ENCODE measurements at regions of chr11 and their contacts with region 1.

Region 1: GRCh38 chr11:62591448-62592145 is at the start of gene TUT1:
- DNase-seq: peak; percentile 98
- ATAC-seq: peak; percentile 86
- H3K4me3 ChIP-seq: peak within 1 kb of the TSS; percentile 81 to 89 (median 82)
- H3K27ac ChIP-seq: peak within 1 kb of the TSS; percentile 85
- H3K4me1 ChIP-seq: peaks cover 51% of the 10 kb centered on the region
- H3K27me3 ChIP-seq: no peaks in the 10 kb centered on the region; a peak in 1 of 5 replicates
- CTCF ChIP-seq: no peak; the same call in 1 of the 2 replicates
- EP300 ChIP-seq: peak in 1 of 2 experiments; percentile 60; a peak in 1 of 4 replicates
- POLR2A ChIP-seq: peak; percentile 96 to 97
- RAD21 ChIP-seq: no peak; the same call in 1 of the 2 replicates
- total RNA-seq, gene TUT1: 8.5 and 9.7 TPM in 2 replicates

Region 2: DNA sequence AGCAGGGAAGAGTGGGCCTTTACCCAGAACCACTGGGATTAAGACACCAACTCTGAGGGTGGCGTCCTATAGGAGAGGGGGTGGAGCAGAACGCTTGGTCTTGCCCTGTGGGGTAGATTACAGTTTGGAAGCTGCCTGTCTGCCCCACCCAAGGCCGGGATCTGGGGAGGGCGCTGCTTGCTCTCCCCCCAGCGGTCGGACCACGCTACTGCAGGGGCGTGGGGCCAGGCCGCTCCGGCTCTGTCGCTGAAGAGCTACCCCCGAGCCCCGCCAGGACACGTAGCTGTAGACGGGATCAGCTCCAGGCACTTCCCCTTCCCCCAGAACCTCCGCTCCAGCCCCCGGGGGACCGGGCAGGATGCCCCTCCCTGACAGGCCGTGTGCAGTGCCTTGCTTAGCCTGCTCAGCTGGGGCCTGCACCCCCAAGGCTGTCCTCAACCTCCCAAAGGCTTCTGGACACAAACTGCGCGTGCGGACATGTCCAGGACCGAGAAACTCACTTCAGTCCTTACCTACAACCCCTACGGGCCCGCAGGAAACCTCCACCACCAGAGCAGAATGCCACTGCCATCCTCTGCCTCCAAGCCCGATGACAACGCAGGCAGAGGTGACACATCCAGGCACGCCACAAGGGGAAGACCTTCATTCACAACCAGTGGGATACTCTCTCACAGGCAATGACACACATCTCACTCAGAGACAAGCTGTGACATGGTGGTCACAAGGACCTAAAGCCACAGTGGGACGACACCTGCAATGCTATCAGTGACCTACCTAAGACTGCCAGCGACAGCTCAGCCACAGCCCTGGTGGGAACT is 48.6 kb before region 1 on chr11:
- CTCF ChIA-PET with region 1: no interaction called
- POLR2A ChIA-PET with region 1: interaction called, 20 read pairs
- in situ Hi-C with region 1: no loop called
- intact Hi-C with region 1: no loop called
- DNase-seq: no peak
- ATAC-seq: peak; percentile 35
- H3K4me3 ChIP-seq: peak overlapping the region; percentile 33 to 93 (median 79)
- H3K27ac ChIP-seq: peak overlapping the region; percentile 19
- H3K4me1 ChIP-seq: peaks cover 60% of the 10 kb centered on the region
- H3K27me3 ChIP-seq: no peaks in the 10 kb centered on the region
- CTCF ChIP-seq: peak; percentile 97
- EP300 ChIP-seq: no peak
- POLR2A ChIP-seq: 0 out of 4 replicates have a peak, but pooled peaks of 1 of the 2 experiments have one; percentile 11
- RAD21 ChIP-seq: peak; percentile 98

Region 3: DNA sequence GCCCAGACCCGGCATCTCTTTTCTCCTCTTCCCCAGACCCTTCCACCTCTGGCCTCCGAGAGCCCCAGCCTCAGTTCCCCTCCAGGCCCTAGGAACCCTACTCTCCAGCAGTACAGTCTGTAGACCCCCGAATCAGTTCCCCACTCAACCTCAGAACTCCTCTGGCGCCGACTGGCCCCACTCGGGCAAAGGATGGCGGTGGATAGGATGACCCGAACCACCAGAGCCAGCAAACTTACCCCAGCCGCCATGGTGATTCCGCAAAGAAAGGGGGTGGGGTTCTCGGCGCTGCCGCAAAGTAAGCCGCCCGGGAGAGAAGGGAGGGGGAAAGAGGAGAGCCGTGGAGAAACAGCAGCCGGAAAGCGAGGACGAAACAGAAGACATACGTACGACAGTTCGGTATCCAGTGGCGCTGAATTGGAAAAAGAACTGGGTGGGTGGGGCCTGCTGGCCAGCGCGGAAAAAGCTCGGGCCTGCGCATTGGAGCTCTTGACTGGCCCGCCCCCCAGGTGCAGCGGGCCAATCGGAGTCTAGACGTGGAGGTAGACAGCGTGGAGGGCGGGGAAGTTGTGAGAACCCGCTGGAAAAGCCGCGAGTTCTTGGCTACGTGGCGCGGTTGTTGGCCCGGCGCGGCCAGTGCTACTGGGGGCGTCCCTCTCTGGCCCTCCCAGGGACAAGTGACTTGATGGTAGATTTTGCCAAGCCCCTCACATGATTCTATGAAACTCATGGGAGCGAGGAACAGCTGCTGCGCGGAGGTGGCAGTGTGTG is 17.8 kb before region 1 on chr11 and contains the start of gene EEF1G:
- CTCF ChIA-PET with region 1: no interaction called
- POLR2A ChIA-PET with region 1: interaction called, 160 read pairs
- in situ Hi-C with region 1: no loop called
- intact Hi-C with region 1: no loop called
- DNase-seq: peak; percentile 99
- ATAC-seq: peak; percentile 93
- H3K4me3 ChIP-seq: peak within 1 kb of the TSS; percentile 80 to 96 (median 95)
- H3K27ac ChIP-seq: peak within 1 kb of the TSS; percentile 85
- H3K4me1 ChIP-seq: peaks cover 63% of the 10 kb centered on the region
- H3K27me3 ChIP-seq: no peaks in the 10 kb centered on the region; a peak in 1 of 5 replicates
- CTCF ChIP-seq: no peak; the same call in 1 of the 2 replicates
- EP300 ChIP-seq: no peak
- POLR2A ChIP-seq: peak; percentile 89 to 91
- RAD21 ChIP-seq: no peak
- total RNA-seq, gene EEF1G: 1,787 and 2,092 TPM in 2 replicates

Region 4: GRCh38 chr11:62621567-62622470 is 30.2 kb after region 1 on chr11 and contains the start of gene B3GAT3:
- CTCF ChIA-PET with region 1: no interaction called
- POLR2A ChIA-PET with region 1: interaction called, 80 read pairs
- in situ Hi-C with region 1: no loop called
- intact Hi-C with region 1: no loop called
- DNase-seq: peak; percentile 95
- ATAC-seq: peak; percentile 95
- H3K4me3 ChIP-seq: peak within 1 kb of the TSS; percentile 74 to 90 (median 81)
- H3K27ac ChIP-seq: peak within 1 kb of the TSS; percentile 72
- H3K4me1 ChIP-seq: peaks cover 21% of the 10 kb centered on the region
- H3K27me3 ChIP-seq: no peaks in the 10 kb centered on the region; a peak in 1 of 5 replicates
- CTCF ChIP-seq: peak; percentile 39
- EP300 ChIP-seq: 0 out of 4 replicates have a peak, but pooled peaks of 1 of the 2 experiments have one; percentile 18
- POLR2A ChIP-seq: peak; percentile 42 to 89
- RAD21 ChIP-seq: peak; percentile 20
- total RNA-seq, gene B3GAT3: 8.4 and 21.3 TPM in 2 replicates

Region 5: GRCh38 chr11:62665075-62665598 is 73.5 kb after region 1 on chr11 and contains the starts of genes C11orf98 and CSKMT:
- CTCF ChIA-PET with region 1: no interaction called
- POLR2A ChIA-PET with region 1: interaction called, 98 read pairs
- in situ Hi-C with region 1: no loop called
- intact Hi-C with region 1: no loop called
- DNase-seq: peak; percentile 85
- ATAC-seq: peak; percentile 86
- H3K4me3 ChIP-seq: peak within 1 kb of the TSS; percentile 69 to 97 (median 91)
- H3K27ac ChIP-seq: peak within 1 kb of the TSS; percentile 84
- H3K4me1 ChIP-seq: peaks cover 47% of the 10 kb centered on the region
- H3K27me3 ChIP-seq: no peaks in the 10 kb centered on the region; a peak in 1 of 5 replicates
- CTCF ChIP-seq: no peak
- EP300 ChIP-seq: peak in 1 of 2 experiments; percentile 11; a peak in 2 of 4 replicates
- POLR2A ChIP-seq: peak; percentile 97 to 99
- RAD21 ChIP-seq: peak; percentile 55
- total RNA-seq, gene C11orf98: 91.8 and 109 TPM in 2 replicates
- total RNA-seq, gene CSKMT: 9.9 and 31.8 TPM in 2 replicates

Region 6: DNA sequence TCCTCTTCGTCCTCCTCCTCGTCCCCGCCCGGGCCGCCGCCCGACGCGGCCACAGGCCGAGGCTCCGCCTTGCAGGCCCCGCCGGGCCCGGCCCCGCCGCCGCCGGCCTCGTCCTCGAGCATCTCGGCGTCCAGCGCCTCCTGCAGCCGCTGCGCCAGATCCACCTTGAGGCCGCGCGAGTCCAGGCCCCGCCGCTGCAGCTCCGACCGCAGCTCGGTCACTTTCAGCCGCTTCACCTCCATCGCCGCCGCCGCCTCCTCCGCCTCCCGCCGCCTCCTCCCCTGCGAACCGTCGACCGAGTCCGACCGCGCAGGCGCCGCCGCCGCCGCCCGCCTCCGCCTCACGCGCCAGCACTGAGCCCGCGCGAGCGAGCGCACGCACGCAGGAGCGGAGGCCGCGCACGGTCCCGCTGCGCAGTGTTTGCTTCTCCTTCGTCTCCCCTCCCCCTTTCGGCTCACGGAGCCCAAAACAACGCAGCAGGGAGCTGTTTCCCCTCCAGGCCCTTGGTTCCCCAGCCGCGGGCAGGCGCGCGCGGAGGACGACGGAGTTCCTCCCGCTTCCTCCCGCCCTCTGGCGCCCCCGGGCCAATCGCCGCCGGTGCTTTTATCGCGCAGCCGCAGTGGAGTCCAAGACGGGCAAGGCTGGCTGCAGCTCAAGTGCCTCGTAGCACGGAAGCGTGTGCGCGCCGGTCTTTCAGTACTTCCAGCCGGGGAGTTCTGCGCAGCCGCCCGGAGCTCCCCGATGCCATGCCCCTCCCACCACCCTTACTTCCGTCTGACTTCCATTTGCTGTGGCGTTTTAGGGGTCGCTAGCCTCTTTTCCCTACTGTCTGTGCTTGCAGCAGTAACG is 135.5 kb after region 1 on chr11 and contains the start of gene HNRNPUL2:
- CTCF ChIA-PET with region 1: no interaction called
- POLR2A ChIA-PET with region 1: interaction called, 39 read pairs
- in situ Hi-C with region 1: no loop called
- intact Hi-C with region 1: no loop called
- DNase-seq: peak; percentile 97
- ATAC-seq: peak; percentile 89
- H3K4me3 ChIP-seq: peak within 1 kb of the TSS; percentile 91 to 100 (median 94)
- H3K27ac ChIP-seq: peak within 1 kb of the TSS; percentile 99
- H3K4me1 ChIP-seq: peaks cover 46% of the 10 kb centered on the region
- H3K27me3 ChIP-seq: peaks cover 0 to 3% of the 10 kb centered on the region in 2 experiments; a peak in 1 of 5 replicates
- CTCF ChIP-seq: peak; percentile 33
- EP300 ChIP-seq: no peak
- POLR2A ChIP-seq: peak; percentile 87 to 91
- RAD21 ChIP-seq: peak; percentile 53; the same call in 1 of the 2 replicates
- total RNA-seq, gene HNRNPUL2: 8.4 and 9.6 TPM in 2 replicates

Measured in HepG2 (cell line).